Activated naive CD4-positive, alpha-beta T cell treated with anti-CD3 and anti-CD28 coated beads, Interleukin-2, amount 10 ng/mL, durations not matched to agents 7 days and 5 days (primary cell): ENCODE measurements at regions of chrX and their contacts with region 1.

Region 1: GRCh38 chrX:10119399-10119990 is 37.3 kb upstream of the CLCN4 start:
- DNase-seq: peak; percentile 66
- H3K4me3 Mint-ChIP-seq: no peak overlapping the region
- H3K27ac Mint-ChIP-seq: no peak overlapping the region
- H3K4me1 Mint-ChIP-seq: peaks cover 8% of the 10 kb centered on the region
- H3K27me3 Mint-ChIP-seq: no peaks in the 10 kb centered on the region

Region 2: DNA sequence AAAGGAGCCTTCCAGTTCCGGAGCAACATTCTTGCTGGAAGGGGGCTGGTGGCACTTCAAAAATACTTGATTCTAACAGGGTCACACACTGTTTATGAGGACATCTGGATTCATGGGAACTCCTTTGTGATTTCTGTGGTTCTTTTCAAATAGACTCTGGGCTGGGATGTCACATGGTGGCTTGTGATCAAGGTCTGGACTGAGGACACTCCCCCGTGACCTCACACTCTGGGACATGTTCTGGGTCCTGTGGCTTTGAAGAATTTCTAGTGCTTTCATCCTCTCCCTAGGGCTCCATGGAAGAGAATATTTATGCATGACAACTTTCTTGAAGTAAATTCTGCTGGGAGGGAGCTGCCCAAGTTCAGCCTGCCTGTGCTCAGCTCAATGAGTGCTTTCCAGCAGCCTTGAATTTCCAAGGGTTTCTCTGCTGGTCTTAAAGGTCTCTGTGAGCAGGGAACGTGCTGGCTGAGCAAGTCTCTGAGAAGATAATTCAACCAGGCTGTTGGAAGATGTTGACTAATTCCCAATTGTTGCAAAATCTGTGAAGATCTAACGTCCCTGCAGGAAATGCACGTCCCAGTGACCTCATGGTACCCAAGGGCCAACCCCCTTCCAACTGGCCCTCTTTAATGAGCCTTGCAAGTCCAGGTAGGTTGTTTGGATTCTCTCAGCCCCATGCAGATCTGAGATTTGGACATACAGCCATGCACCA is 390.2 kb before region 1 on chrX:
- CTCF ChIA-PET with region 1: no interaction called
- DNase-seq: no peak
- H3K4me3 Mint-ChIP-seq: no peak overlapping the region
- H3K27ac Mint-ChIP-seq: no peak overlapping the region
- H3K4me1 Mint-ChIP-seq: no peaks in the 10 kb centered on the region
- H3K27me3 Mint-ChIP-seq: peaks cover 3% of the 10 kb centered on the region

Region 3: GRCh38 chrX:10077425-10078188 is 41.9 kb before region 1 on chrX:
- CTCF ChIA-PET with region 1: interaction called, 14 read pairs
- DNase-seq: peak; percentile 28
- H3K4me3 Mint-ChIP-seq: no peak overlapping the region
- H3K27ac Mint-ChIP-seq: no peak overlapping the region
- H3K4me1 Mint-ChIP-seq: peaks cover 11% of the 10 kb centered on the region
- H3K27me3 Mint-ChIP-seq: no peaks in the 10 kb centered on the region

Region 4: DNA sequence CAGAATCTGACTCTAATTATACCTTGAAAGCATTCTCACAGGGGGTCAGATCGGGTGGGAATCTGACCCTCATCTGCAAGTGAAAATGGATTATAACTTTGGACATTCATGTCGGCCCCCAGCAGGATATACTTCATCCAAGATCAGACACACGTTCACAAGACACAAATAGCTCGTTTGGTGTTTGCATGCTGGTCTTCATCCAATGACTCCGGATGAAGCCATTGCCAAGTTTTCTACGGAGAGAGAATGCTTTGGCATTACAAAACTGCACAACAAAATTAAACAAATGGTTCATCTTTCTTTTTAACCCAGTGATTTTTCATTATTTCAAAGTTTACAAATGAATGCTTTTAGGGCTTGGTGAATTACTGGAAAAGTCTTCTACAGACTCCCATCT is 395.4 kb after region 1 on chrX:
- CTCF ChIA-PET with region 1: no interaction called
- DNase-seq: no peak
- H3K4me3 Mint-ChIP-seq: no peak overlapping the region
- H3K27ac Mint-ChIP-seq: no peak overlapping the region
- H3K4me1 Mint-ChIP-seq: no peaks in the 10 kb centered on the region
- H3K27me3 Mint-ChIP-seq: no peaks in the 10 kb centered on the region